ENCODE measurements at regions of chr1 and their contacts with region 1.

Region 1: GRCh38 chr1:198088360-198089071 is 68.3 kb upstream of the NEK7 start:
- DNase-seq: peak; percentile 69
- H3K4me3 ChIP-seq: no peak overlapping the region
- H3K27ac ChIP-seq: peak overlapping the region; percentile 21
- H3K4me1 ChIP-seq: peaks cover 4% of the 10 kb centered on the region
- H3K27me3 ChIP-seq: no peaks in the 10 kb centered on the region
- CTCF ChIP-seq: peak; percentile 31 to 48
- POLR2A ChIP-seq: no peak

Region 2: GRCh38 chr1:198030682-198031081 is 57.8 kb before region 1 on chr1:
- CTCF ChIA-PET with region 1: no interaction called
- POLR2A ChIA-PET with region 1: no interaction called
- dilution Hi-C with region 1: no loop called
- intact Hi-C with region 1: no loop called
- DNase-seq: no peak
- H3K4me3 ChIP-seq: no peak overlapping the region
- H3K27ac ChIP-seq: no peak overlapping the region
- H3K4me1 ChIP-seq: no peaks in the 10 kb centered on the region
- H3K27me3 ChIP-seq: no peaks in the 10 kb centered on the region
- CTCF ChIP-seq: no peak
- POLR2A ChIP-seq: no peak

Region 3: GRCh38 chr1:198072177-198072576 is 16.3 kb before region 1 on chr1:
- CTCF ChIA-PET with region 1: interaction called, 11 read pairs
- POLR2A ChIA-PET with region 1: no interaction called
- dilution Hi-C with region 1: no loop called
- intact Hi-C with region 1: no loop called
- DNase-seq: peak; percentile 37
- H3K4me3 ChIP-seq: no peak overlapping the region
- H3K27ac ChIP-seq: no peak overlapping the region
- H3K4me1 ChIP-seq: no peaks in the 10 kb centered on the region
- H3K27me3 ChIP-seq: no peaks in the 10 kb centered on the region
- CTCF ChIP-seq: peak; percentile 4 to 26
- POLR2A ChIP-seq: no peak

Region 4: GRCh38 chr1:198125995-198126735 is 37.6 kb after region 1 on chr1:
- CTCF ChIA-PET with region 1: interaction called, 3 read pairs
- POLR2A ChIA-PET with region 1: no interaction called
- dilution Hi-C with region 1: no loop called
- intact Hi-C with region 1: loop called (anchors 2 kb)
- DNase-seq: peak; percentile 80
- H3K4me3 ChIP-seq: no peak overlapping the region
- H3K27ac ChIP-seq: peak overlapping the region; percentile 52
- H3K4me1 ChIP-seq: peaks cover 33% of the 10 kb centered on the region
- H3K27me3 ChIP-seq: no peaks in the 10 kb centered on the region
- CTCF ChIP-seq: no peak
- POLR2A ChIP-seq: no peak

Region 5: GRCh38 chr1:198220428-198220827 is 131.9 kb after region 1 on chr1:
- CTCF ChIA-PET with region 1: no interaction called
- POLR2A ChIA-PET with region 1: no interaction called
- dilution Hi-C with region 1: no loop called
- intact Hi-C with region 1: loop called (anchors 2 kb)
- DNase-seq: peak; percentile 98
- H3K4me3 ChIP-seq: no peak overlapping the region
- H3K27ac ChIP-seq: peak overlapping the region; percentile 75
- H3K4me1 ChIP-seq: peaks cover 15% of the 10 kb centered on the region
- H3K27me3 ChIP-seq: no peaks in the 10 kb centered on the region
- CTCF ChIP-seq: no peak
- POLR2A ChIP-seq: peak; percentile 60

Region 6: GRCh38 chr1:198265073-198265661 is 176.7 kb after region 1 on chr1:
- CTCF ChIA-PET with region 1: interaction called, 3 read pairs
- POLR2A ChIA-PET with region 1: no interaction called
- dilution Hi-C with region 1: no loop called
- intact Hi-C with region 1: loop called (anchors 5 kb)
- DNase-seq: peak; percentile 61
- H3K4me3 ChIP-seq: no peak overlapping the region
- H3K27ac ChIP-seq: no peak overlapping the region
- H3K4me1 ChIP-seq: peaks cover 42% of the 10 kb centered on the region
- H3K27me3 ChIP-seq: no peaks in the 10 kb centered on the region
- CTCF ChIP-seq: no peak
- POLR2A ChIP-seq: no peak

Region 7: GRCh38 chr1:198359024-198359653 is 270.6 kb after region 1 on chr1:
- CTCF ChIA-PET with region 1: interaction called, 4 read pairs
- POLR2A ChIA-PET with region 1: no interaction called
- dilution Hi-C with region 1: no loop called
- intact Hi-C with region 1: loop called (anchors 1 kb)
- DNase-seq: peak; percentile 32
- H3K4me3 ChIP-seq: no peak overlapping the region
- H3K27ac ChIP-seq: no peak overlapping the region
- H3K4me1 ChIP-seq: no peaks in the 10 kb centered on the region
- H3K27me3 ChIP-seq: no peaks in the 10 kb centered on the region
- CTCF ChIP-seq: peak; percentile 27 to 36
- POLR2A ChIP-seq: no peak

Measured in endothelial cell of umbilical vein (primary cell).